ENCODE measurements at regions of chr12 and their contacts with region 1.

Region 1: DNA sequence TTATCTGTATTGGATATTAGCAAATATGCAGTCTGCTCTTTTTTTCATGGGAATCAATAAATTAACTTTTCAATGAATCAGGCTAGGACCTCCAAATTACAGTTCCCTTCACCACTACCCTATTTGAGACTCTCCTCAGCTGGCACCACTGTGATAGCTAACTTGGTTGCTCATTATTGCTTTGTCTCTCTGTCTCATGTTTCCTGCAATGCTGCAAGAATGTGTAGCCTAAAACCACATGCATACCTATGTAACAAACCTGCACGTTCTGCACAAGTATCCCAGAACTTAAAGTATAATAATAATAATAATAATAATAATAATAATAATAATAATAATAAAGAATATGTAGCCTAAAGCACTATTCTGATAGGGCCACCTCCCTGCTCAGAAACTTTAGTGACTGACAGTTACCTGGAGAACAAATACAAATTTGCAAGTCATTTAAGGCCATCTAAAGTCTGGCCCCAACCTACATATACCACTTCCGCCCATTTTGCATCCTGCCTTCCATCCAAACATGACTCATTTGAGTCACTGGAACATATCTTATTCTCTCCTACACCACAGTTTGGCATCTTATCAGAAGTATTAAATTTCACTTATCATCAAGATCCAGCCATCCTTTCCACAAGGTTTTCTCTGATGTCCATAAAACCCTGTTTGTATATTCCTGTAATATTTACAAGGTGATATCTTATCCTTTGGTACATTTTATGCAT is 215.1 kb downstream of the LRRK2 start:
- DNase-seq: no peak
- H3K4me3 Mint-ChIP-seq: no peak overlapping the region
- H3K27ac Mint-ChIP-seq: no peak overlapping the region
- H3K4me1 Mint-ChIP-seq: no peaks in the 10 kb centered on the region
- H3K27me3 Mint-ChIP-seq: no peaks in the 10 kb centered on the region
- CTCF ChIP-seq: no peak

Region 2: DNA sequence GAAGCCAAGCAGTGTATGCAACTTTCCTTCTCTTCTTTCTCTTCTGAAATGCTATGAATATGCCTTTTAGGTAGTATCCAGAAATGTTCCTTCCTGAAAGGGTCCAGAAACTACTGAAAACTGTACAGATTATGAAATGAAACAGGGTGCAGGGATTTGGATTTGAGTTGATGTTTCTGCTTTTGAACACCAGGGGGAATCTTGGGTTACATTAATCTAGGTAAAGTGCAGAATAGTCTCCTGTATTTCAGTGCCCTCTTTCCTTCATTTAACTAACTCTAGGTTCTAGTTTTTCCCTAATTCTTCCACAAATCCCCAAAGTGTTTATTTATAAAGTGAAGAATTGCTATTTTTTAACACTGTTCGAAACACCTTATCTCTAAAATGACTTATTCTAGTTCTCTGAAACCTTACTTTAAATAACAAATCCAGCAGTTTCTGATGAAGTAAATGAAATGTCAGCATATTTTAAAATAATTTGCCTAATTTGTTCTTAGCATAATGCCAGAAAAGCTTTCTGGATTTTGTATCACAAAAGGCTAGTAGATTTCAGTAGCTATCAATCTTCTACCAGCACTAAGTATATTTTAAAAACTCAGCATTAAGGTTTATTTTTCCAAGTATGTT is 103.2 kb before region 1 on chr12:
- CTCF ChIA-PET with region 1: no interaction called
- intact Hi-C with region 1: loop called (anchors 10 kb)
- DNase-seq: peak; percentile 1
- H3K4me3 Mint-ChIP-seq: no peak overlapping the region
- H3K27ac Mint-ChIP-seq: no peak overlapping the region
- H3K4me1 Mint-ChIP-seq: no peaks in the 10 kb centered on the region
- H3K27me3 Mint-ChIP-seq: no peaks in the 10 kb centered on the region
- CTCF ChIP-seq: peak; percentile 45

Measured in Calu3 (cell line).